B cell (primary cell): ENCODE measurements at regions of chr14 and their contacts with region 1.

Region 1: GRCh38 chr14:61750708-61751474 is 11.3 kb upstream of the SNAPC1 start:
- DNase-seq: peak; percentile 91
- ATAC-seq: peak; percentile 91
- H3K4me3 ChIP-seq: peak overlapping the region; percentile 47 to 71 (median 59)
- H3K4me3 Mint-ChIP-seq: peak overlapping the region; percentile 92
- H3K27ac ChIP-seq: peak overlapping the region; percentile 47 to 73
- H3K27ac Mint-ChIP-seq: peak overlapping the region; percentile 93
- H3K4me1 ChIP-seq: peaks cover 25 to 27% of the 10 kb centered on the region in 2 donors
- H3K4me1 Mint-ChIP-seq: peaks cover 42% of the 10 kb centered on the region
- H3K27me3 ChIP-seq: no peaks in the 10 kb centered on the region
- H3K27me3 Mint-ChIP-seq: no peaks in the 10 kb centered on the region
- CTCF ChIP-seq: no peak

Region 2: DNA sequence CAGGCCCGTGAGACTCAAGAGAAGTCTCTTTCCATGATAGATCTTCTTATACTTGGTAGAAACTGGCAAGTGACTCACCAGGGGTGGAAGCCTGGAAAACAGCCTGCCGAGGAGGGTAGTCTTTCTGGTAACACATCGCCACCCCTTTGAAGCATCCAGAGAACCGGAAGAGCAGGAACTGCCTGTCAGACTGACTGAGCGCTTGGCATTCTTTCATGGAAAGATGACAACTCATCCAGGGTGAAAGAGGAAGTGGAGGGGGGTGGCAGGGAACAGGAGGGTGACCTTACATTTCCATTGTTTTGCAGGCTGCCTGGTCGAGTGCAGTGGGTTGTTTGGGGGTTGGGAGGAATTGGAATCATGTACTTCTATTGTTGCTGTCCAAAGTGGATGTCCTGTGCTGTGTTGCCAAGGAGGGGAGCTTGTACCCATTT is 395.0 kb before region 1 on chr14:
- CTCF ChIA-PET with region 1: no interaction called
- POLR2A ChIA-PET with region 1: no interaction called
- intact Hi-C with region 1: no loop called
- DNase-seq: no peak
- ATAC-seq: no peak
- H3K4me3 ChIP-seq: no peak overlapping the region
- H3K4me3 Mint-ChIP-seq: no peak overlapping the region
- H3K27ac ChIP-seq: no peak overlapping the region
- H3K27ac Mint-ChIP-seq: no peak overlapping the region
- H3K4me1 ChIP-seq: peaks cover 0 to 11% of the 10 kb centered on the region in 2 donors
- H3K4me1 Mint-ChIP-seq: peaks cover 6% of the 10 kb centered on the region
- H3K27me3 ChIP-seq: no peaks in the 10 kb centered on the region
- H3K27me3 Mint-ChIP-seq: peaks cover 4% of the 10 kb centered on the region
- CTCF ChIP-seq: no peak

Region 3: DNA sequence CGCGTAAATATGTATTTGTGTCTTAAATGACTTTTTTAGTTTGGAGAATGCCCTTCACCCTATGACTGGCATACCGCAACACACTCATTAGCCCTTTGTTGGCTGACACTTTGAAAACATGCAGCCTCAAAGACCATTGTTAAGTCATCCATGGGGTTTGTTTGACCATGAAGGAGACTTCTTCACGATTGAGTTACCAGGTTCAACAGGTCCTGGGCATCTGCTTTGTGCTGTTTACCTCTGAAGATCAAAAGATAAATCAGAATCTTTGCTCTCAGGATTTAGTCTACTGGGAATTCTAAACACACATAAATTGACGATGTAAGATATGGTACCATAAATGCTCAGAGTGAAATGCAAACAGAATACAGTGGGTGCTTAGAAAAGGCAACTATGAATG is 241.7 kb before region 1 on chr14:
- CTCF ChIA-PET with region 1: no interaction called
- POLR2A ChIA-PET with region 1: no interaction called
- intact Hi-C with region 1: no loop called
- DNase-seq: no peak
- ATAC-seq: no peak
- H3K4me3 ChIP-seq: no peak overlapping the region
- H3K4me3 Mint-ChIP-seq: no peak overlapping the region
- H3K27ac ChIP-seq: no peak overlapping the region
- H3K27ac Mint-ChIP-seq: no peak overlapping the region
- H3K4me1 ChIP-seq: peaks cover 46 to 67% of the 10 kb centered on the region in 2 donors
- H3K4me1 Mint-ChIP-seq: peaks cover 64% of the 10 kb centered on the region
- H3K27me3 ChIP-seq: no peaks in the 10 kb centered on the region
- H3K27me3 Mint-ChIP-seq: no peaks in the 10 kb centered on the region
- CTCF ChIP-seq: no peak

Region 4: DNA sequence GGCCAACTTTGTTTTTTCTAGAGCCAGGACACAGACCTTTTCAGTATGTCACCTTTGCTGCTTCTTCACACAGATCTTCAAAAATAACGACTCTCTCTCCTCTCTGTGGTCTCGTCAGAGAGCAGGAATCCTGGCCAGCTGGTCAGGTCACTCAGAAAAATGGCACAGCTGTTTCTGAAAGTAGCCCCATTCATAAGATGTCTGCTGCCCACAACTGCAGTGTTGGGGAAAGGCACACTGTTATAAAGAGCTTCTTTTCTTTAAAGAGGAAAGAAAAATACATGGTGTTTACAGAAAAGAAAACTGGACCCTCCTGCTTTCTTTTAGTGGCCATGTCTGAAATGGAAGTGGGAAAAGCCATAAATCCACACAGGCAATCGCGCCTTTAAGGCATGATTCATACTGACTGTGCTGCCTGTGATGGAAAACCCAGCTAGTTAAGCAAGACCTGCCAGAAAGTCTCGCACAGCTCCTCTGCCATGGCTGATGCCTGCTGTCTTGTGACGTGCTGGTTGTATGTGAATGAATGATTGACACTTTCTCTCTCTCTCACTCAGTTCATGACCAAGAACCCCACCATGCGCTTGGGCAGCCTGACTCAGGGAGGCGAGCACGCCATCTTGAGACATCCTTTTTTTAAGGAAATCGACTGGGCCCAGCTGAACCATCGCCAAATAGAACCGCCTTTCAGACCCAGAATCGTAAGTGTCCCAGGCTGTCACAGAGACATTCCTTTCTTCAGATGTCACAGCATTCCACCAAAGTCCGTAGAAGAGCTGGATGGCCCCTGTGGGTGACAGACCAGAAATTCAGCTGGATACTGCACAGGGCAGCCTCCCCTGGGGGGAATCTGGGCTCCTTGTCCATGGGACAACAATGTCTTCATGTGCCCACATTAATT is 203.5 kb before region 1 on chr14:
- CTCF ChIA-PET with region 1: no interaction called
- POLR2A ChIA-PET with region 1: no interaction called
- intact Hi-C with region 1: no loop called
- DNase-seq: no peak
- ATAC-seq: no peak
- H3K4me3 ChIP-seq: no peak overlapping the region
- H3K4me3 Mint-ChIP-seq: no peak overlapping the region
- H3K27ac ChIP-seq: no peak overlapping the region
- H3K27ac Mint-ChIP-seq: peak overlapping the region; percentile 60
- H3K4me1 ChIP-seq: peaks cover 2 to 7% of the 10 kb centered on the region in 2 donors
- H3K4me1 Mint-ChIP-seq: peaks cover 21% of the 10 kb centered on the region
- H3K27me3 ChIP-seq: no peaks in the 10 kb centered on the region
- H3K27me3 Mint-ChIP-seq: no peaks in the 10 kb centered on the region
- CTCF ChIP-seq: no peak

Region 5: GRCh38 chr14:61598980-61599379 is 151.9 kb before region 1 on chr14:
- CTCF ChIA-PET with region 1: no interaction called
- POLR2A ChIA-PET with region 1: interaction called, 11 read pairs
- intact Hi-C with region 1: no loop called
- DNase-seq: peak; percentile 20
- ATAC-seq: peak; percentile 28
- H3K4me3 ChIP-seq: no peak overlapping the region
- H3K4me3 Mint-ChIP-seq: peak overlapping the region; percentile 21
- H3K27ac ChIP-seq: peak overlapping the region in 1 of 2 donors; percentile 20
- H3K27ac Mint-ChIP-seq: peak overlapping the region; percentile 55
- H3K4me1 ChIP-seq: peaks cover 22 to 25% of the 10 kb centered on the region in 2 donors
- H3K4me1 Mint-ChIP-seq: peaks cover 38% of the 10 kb centered on the region
- H3K27me3 ChIP-seq: no peaks in the 10 kb centered on the region
- H3K27me3 Mint-ChIP-seq: no peaks in the 10 kb centered on the region
- CTCF ChIP-seq: no peak

Region 6: DNA sequence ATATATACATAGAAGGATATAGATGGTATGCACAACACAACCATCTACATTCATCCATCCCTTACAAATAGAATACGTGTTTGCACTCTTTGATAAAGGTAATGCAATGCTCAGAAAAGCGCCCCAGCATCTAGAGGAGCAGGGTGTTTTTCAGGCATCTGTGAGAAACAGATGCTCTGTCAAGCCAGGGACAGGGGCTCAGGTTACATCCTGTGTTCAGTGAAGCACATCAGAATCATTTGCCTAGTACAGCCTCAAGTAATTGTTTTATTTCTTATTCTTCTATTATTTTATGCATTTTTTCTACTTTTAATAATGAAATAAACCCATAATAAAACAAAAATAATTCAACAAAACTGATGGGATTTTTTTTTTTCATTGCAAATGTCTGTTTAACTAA is 106.1 kb before region 1 on chr14:
- CTCF ChIA-PET with region 1: no interaction called
- POLR2A ChIA-PET with region 1: no interaction called
- intact Hi-C with region 1: no loop called
- DNase-seq: peak; percentile 53
- ATAC-seq: peak; percentile 76
- H3K4me3 ChIP-seq: no peak overlapping the region
- H3K4me3 Mint-ChIP-seq: no peak overlapping the region
- H3K27ac ChIP-seq: peak overlapping the region in 1 of 2 donors; percentile 54
- H3K27ac Mint-ChIP-seq: peak overlapping the region; percentile 38
- H3K4me1 ChIP-seq: peaks cover 30 to 31% of the 10 kb centered on the region in 2 donors
- H3K4me1 Mint-ChIP-seq: peaks cover 33% of the 10 kb centered on the region
- H3K27me3 ChIP-seq: no peaks in the 10 kb centered on the region
- H3K27me3 Mint-ChIP-seq: no peaks in the 10 kb centered on the region
- CTCF ChIP-seq: no peak

Region 7: DNA sequence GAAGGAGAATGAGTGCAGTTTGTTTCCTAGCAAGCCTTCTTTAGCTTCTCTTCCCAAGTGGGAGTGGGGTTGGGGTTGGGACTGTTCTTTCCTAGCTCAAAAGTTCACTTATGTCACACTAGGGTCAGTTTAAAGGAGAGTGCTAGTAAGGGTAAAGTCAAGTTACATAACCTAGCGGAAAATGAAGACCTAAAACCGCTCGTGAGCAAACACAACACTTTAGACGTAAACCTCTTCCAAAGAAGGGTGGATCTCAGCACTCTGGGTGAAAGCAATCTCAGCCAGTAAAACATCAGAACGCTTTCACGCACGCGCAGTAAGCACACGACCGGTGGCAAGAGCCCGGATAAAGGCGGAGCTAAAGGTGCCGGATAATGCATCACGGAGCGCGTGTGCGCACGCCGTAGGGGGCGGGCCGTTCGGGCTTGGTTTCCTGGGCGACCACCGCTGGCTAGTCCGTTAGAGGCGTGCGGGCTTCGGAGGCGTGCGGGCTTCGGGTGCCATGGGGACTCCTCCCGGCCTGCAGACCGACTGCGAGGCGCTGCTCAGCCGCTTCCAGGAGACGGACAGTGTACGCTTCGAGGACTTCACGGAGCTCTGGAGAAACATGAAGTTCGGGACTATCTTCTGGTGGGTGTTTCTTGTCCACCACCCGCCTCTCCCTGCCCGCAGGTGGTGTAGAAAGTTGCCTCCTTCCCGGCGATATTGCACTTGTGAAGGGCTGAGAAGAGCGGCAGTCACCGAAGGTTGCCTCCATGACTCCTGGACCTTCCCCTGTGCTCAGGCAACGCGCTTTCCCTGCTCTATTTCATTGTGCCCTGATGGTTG is 11.3 kb after region 1 on chr14 and contains the start of gene SNAPC1:
- CTCF ChIA-PET with region 1: interaction called, 11 read pairs
- POLR2A ChIA-PET with region 1: interaction called, 10 read pairs
- intact Hi-C with region 1: loop called (anchors 1 kb)
- DNase-seq: peak; percentile 99
- ATAC-seq: peak; percentile 98
- H3K4me3 ChIP-seq: peak within 1 kb of the TSS; percentile 93 to 95 (median 95)
- H3K4me3 Mint-ChIP-seq: peak within 1 kb of the TSS; percentile 95
- H3K27ac ChIP-seq: peak within 1 kb of the TSS; percentile 90 to 91
- H3K27ac Mint-ChIP-seq: peak within 1 kb of the TSS; percentile 99
- H3K4me1 ChIP-seq: peaks cover 19 to 22% of the 10 kb centered on the region in 2 donors
- H3K4me1 Mint-ChIP-seq: peaks cover 36% of the 10 kb centered on the region
- H3K27me3 ChIP-seq: no peaks in the 10 kb centered on the region
- H3K27me3 Mint-ChIP-seq: no peaks in the 10 kb centered on the region
- CTCF ChIP-seq: no peak
- total RNA-seq, gene SNAPC1: 6.6 and 7.1 TPM in 2 replicates